PC-9 (cell line): ENCODE measurements at regions of chr6 and their contacts with region 1.

Region 1: DNA sequence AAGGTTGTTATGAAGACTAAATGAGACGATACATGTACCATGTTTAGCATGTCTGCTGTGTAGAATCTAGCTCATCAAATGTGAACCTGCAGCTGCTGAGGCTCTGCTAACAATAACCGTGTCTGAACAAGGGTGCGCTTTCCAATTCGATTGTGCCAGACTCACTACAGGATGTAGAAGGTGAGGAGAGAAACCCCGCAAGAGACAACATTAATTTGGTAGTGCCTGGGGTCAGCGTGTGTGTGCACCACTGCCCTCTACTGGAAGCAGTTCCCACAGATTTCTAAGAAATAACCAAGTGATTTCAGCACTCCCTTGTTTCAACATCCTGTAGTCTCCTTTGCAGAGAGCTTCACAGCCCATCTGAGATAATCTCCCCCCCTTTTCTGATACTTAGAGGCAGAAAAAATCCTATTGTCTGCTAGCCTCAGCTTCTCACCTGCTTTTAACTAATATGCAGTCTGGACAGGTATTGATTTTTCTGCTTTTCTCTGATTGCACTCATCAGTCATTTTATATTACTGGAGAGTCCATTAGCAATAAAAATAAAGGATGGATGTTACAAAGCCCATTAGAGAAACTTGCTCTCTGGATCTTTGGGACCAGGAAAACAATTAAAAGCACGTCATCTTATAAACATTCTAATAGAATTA is 96.7 kb upstream of the BACH2 start:
- DNase-seq: peak in 1 of 2 experiments; percentile 31
- H3K4me3 ChIP-seq: no peak overlapping the region
- H3K27ac ChIP-seq: no peak overlapping the region
- H3K4me1 ChIP-seq: peaks cover 12% of the 10 kb centered on the region
- H3K27me3 ChIP-seq: no peaks in the 10 kb centered on the region
- CTCF ChIP-seq: peak; percentile 75

Region 2: DNA sequence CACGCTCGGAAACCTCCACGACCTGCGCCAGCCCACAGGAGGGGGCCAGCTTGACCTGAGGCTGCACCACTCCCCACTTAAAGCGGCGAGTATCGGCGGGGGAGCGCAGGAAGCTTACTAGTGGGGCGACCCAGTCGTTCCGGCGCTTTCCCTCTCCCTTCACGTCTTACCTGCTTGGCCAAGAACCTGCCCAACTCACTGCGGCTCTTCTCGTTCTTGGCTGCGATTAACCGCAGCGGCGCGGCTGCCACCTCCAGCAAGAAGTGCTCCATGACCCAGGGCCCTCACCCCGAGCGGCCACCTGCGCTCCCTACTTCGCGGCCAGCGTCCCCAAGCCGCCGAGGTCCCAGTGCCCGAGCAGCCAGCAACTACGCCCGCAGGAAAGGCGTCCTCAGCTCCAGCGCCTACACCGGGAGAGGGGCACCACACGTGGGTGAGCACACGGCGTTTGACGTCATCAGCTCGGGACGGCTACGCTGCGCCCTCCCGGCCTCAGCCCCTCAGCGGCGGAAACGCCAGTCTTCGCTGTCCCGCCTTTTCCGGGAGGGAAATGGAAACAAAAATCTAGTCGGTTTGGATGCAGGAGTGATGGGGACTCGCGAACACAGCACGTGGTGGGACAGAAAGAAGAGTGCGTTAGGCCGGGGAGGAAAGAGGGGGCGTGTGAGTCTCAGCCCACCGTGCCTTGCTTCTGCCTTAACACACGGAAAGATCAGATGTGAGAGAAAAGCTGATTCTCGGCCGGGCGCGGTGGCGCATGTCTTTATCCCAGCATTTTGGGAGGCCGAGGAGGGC is 573.8 kb before region 1 on chr6 and contains the start of gene MDN1:
- CTCF ChIA-PET with region 1: interaction called, 14 read pairs
- POLR2A ChIA-PET with region 1: no interaction called
- intact Hi-C with region 1: no loop called
- DNase-seq: peak; percentile 83 to 86
- H3K4me3 ChIP-seq: peak within 1 kb of the TSS; percentile 69
- H3K27ac ChIP-seq: peak within 1 kb of the TSS; percentile 58
- H3K4me1 ChIP-seq: peaks cover 7% of the 10 kb centered on the region
- H3K27me3 ChIP-seq: no peaks in the 10 kb centered on the region
- CTCF ChIP-seq: no peak
- total RNA-seq, gene MDN1: 38.1 and 38.6 TPM in 2 replicates

Region 3: GRCh38 chr6:89940225-89941027 is 452.9 kb before region 1 on chr6:
- CTCF ChIA-PET with region 1: interaction called, 4 read pairs
- POLR2A ChIA-PET with region 1: no interaction called
- intact Hi-C with region 1: loop called (anchors 10 kb)
- DNase-seq: peak; percentile 47 to 54
- H3K4me3 ChIP-seq: no peak overlapping the region
- H3K27ac ChIP-seq: no peak overlapping the region
- H3K4me1 ChIP-seq: no peaks in the 10 kb centered on the region
- H3K27me3 ChIP-seq: no peaks in the 10 kb centered on the region
- CTCF ChIP-seq: peak; percentile 76

Region 4: DNA sequence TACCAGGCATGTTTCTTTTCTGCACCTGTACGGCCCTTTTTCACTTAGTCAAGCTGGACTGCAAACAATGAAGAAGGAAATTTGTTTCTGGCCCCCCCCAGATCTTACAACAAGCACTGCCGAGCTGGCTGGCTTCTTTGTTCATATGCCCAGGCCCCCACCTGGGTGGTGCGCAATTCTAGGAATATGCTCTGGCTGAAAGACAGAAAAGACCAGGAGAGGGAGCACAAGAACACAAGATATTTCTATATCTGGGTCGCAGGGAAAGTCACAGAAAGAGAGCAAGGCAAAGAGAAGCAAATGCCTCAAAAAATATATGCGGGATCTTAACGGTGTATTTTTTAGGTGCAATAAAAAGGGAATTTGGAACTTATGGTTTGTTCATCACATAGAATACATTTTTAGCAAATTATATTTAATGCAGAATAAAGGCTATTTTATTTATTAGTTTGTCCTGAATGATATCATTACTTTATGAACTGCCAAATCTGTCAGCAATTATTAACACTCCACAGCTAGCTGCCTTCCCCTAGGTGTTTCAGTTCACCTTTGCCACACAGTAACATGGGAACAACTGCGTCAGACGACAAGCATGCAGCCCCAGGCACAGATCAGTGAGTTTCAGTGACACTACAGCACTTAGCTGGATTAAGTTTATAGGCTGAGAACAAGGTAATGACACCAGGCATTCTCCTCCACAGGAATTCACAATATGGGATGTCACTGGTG is 422.6 kb before region 1 on chr6:
- CTCF ChIA-PET with region 1: no interaction called
- POLR2A ChIA-PET with region 1: no interaction called
- intact Hi-C with region 1: loop called (anchors 5 kb)
- DNase-seq: peak; percentile 36 to 61
- H3K4me3 ChIP-seq: no peak overlapping the region
- H3K27ac ChIP-seq: peak overlapping the region; percentile 56
- H3K4me1 ChIP-seq: peaks cover 5% of the 10 kb centered on the region; the same call in 1 of the 2 replicates
- H3K27me3 ChIP-seq: no peaks in the 10 kb centered on the region
- CTCF ChIP-seq: peak; percentile 69

Region 5: DNA sequence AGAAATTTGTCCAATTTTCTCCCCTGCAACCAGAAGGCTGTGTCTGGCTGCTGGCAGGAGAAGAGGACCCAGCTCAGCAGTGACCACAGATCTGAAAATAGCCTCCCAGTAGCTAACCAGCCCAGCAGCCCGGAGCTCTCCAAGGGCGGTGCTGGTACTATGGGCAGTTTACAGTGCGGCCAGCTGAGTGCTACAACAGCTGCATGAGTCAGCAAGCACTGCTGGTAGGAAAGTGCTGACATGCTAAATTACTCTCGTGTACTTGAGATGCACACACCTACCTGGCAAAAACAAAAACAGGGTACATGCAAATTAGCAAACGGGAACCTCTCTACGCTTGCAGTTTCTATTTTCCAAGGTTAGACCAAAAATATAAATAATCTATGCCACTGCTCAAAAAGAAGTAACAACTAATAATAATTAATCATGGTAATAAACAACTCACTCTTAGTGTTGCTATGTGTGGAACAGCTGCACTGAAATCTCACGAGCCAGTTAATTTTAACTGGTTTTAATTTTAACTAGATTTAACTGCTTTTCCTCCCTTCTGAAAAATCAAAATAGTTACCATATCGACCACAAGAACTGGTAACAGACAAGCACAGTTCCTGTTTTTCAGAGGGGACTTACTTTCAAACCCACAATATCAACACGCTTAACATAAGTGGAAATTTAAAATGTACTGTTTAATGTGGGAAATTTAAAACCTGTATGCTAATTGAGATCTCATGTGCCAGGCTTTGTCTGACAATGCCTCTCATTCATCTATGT is 107.6 kb before region 1 on chr6:
- CTCF ChIA-PET with region 1: no interaction called
- POLR2A ChIA-PET with region 1: no interaction called
- intact Hi-C with region 1: loop called (anchors 10 kb)
- DNase-seq: peak; percentile 69
- H3K4me3 ChIP-seq: no peak overlapping the region
- H3K27ac ChIP-seq: peak overlapping the region; percentile 87
- H3K4me1 ChIP-seq: peaks cover 22% of the 10 kb centered on the region
- H3K27me3 ChIP-seq: no peaks in the 10 kb centered on the region
- CTCF ChIP-seq: no peak

Region 6: GRCh38 chr6:90296346-90297114 is 96.8 kb before region 1 on chr6 and contains the start of gene BACH2:
- CTCF ChIA-PET with region 1: interaction called, 18 read pairs
- POLR2A ChIA-PET with region 1: no interaction called
- intact Hi-C with region 1: no loop called
- DNase-seq: peak; percentile 57 to 78
- H3K4me3 ChIP-seq: peak within 1 kb of the TSS; percentile 57
- H3K27ac ChIP-seq: no peak within 1 kb of the TSS
- H3K4me1 ChIP-seq: peaks cover 9% of the 10 kb centered on the region; the same call in 1 of the 2 replicates
- H3K27me3 ChIP-seq: 0 out of 2 replicates have a peak, but pooled peaks cover 5% of the 10 kb centered on the region
- CTCF ChIP-seq: no peak
- total RNA-seq, gene BACH2: 2.3 and 4.2 TPM in 2 replicates

Region 7: GRCh38 chr6:90478789-90479602 is 85.6 kb after region 1 on chr6:
- CTCF ChIA-PET with region 1: interaction called, 5 read pairs
- POLR2A ChIA-PET with region 1: no interaction called
- intact Hi-C with region 1: loop called (anchors 2 kb)
- DNase-seq: peak; percentile 81 to 82
- H3K4me3 ChIP-seq: no peak overlapping the region
- H3K27ac ChIP-seq: no peak overlapping the region
- H3K4me1 ChIP-seq: no peaks in the 10 kb centered on the region
- H3K27me3 ChIP-seq: no peaks in the 10 kb centered on the region
- CTCF ChIP-seq: peak; percentile 81